ENCODE measurements at regions of chr12 and their contacts with region 1.

Region 1: GRCh38 chr12:123580772-123581171 is 3.6 kb upstream of the TMED2 start:
- DNase-seq: no peak
- H3K4me3 ChIP-seq: no peak overlapping the region
- H3K4me3 Mint-ChIP-seq: no peak overlapping the region
- H3K27ac Mint-ChIP-seq: no peak overlapping the region
- H3K4me1 ChIP-seq: peaks cover 20% of the 10 kb centered on the region
- H3K4me1 Mint-ChIP-seq: peaks cover 12% of the 10 kb centered on the region
- H3K27me3 ChIP-seq: no peaks in the 10 kb centered on the region
- H3K27me3 Mint-ChIP-seq: no peaks in the 10 kb centered on the region
- CTCF ChIP-seq: no peak

Region 2: DNA sequence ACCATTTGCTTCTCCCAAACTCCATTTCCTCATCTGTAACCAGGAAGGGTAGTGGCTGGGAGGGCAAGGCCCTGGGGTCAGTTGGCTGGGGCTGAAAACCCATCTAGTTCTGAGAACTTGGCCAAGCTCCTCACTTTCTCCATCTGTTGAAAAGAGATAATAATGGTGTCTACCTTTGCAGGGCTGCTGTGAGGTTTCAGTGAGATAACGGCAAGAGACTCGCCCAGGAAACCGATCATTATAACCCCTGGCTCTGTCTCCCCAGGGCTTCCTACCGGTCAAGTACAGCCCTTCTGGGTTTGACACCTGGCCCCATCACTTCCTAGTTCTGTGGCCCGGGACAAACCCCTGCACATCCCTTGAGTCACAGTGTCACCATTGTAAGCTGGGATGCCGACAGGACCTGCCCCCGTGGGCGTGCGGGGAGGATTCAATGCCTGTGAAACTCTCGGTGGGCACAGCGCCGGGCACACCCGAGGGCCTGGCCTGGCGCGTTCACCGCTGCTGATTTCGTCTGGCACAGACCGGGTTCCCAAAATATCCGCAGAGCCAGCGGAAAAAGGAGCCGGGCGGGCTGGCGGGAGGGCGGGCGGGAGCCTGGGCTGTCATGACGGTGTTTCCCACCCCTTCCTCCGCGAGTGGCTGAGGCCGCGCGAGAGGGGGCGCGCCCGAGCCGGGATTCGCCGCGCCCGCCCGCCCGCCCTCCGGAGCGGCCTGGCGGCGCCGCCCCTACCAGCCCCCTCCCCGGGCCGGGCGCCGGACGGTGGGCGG is 192.4 kb before region 1 on chr12:
- CTCF ChIA-PET with region 1: no interaction called
- POLR2A ChIA-PET with region 1: no interaction called
- intact Hi-C with region 1: loop called (anchors 5 kb)
- DNase-seq: peak; percentile 67 to 87
- H3K4me3 ChIP-seq: peak overlapping the region; percentile 88
- H3K4me3 Mint-ChIP-seq: peak overlapping the region; percentile 75
- H3K27ac Mint-ChIP-seq: peak overlapping the region; percentile 66
- H3K4me1 ChIP-seq: peaks cover 4% of the 10 kb centered on the region; the same call in 1 of the 2 replicates
- H3K4me1 Mint-ChIP-seq: peaks cover 21% of the 10 kb centered on the region
- H3K27me3 ChIP-seq: no peaks in the 10 kb centered on the region
- H3K27me3 Mint-ChIP-seq: no peaks in the 10 kb centered on the region
- CTCF ChIP-seq: peak in 1 of 2 experiments; percentile 5

Region 3: DNA sequence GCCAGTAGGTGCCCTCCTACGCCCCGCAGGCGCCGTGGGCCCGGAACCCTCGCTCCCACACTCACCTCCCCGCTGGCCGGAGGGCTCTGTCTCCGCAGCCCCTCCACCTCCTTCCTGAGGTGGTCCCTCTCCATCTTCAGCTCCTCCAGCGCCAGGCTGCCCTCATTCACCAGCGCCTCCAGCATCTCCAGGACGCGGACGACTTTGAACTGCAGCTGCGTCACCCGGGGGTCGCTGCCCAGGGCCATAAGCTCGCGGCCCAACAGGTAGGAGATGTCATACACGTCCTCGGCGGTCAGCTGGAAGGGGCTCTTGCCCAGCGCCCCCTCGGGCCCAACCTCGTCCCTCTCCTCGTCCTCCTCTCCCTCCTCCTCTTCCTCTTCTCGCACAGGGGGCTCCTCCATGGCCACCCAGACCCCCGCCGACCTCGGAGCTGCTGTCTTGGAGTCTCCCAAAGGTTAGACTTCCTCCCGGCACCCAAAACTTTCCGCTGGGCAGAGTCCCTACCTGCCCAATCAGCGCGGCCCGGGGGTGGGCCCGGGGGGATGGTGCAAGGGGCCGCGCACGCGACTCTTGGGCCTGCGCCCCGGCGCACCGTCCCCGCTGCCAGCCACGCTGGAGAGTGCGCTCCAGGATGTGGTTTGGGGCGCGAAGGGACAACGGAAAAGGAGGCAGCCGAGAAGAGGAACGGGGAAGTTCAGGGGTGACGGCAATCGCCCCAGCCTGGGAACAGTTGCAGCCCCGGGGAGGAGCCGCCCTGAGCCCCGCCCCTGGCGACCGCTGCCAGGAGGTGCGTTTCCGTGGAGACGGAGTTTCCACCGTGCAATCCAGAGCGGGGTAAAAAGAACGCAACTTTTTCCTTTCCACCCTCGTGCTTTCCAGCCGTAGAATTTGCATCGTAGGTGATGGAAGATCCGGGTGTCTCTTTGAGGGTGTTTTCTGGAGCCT is 144.5 kb before region 1 on chr12 and contains the start of gene RILPL2:
- CTCF ChIA-PET with region 1: no interaction called
- POLR2A ChIA-PET with region 1: interaction called, 3 read pairs
- intact Hi-C with region 1: loop called (anchors 5 kb)
- DNase-seq: peak; percentile 78 to 86
- H3K4me3 ChIP-seq: peak within 1 kb of the TSS; percentile 86
- H3K4me3 Mint-ChIP-seq: peak within 1 kb of the TSS; percentile 92
- H3K27ac Mint-ChIP-seq: peak within 1 kb of the TSS; percentile 89
- H3K4me1 ChIP-seq: no peaks in the 10 kb centered on the region
- H3K4me1 Mint-ChIP-seq: no peaks in the 10 kb centered on the region
- H3K27me3 ChIP-seq: no peaks in the 10 kb centered on the region
- H3K27me3 Mint-ChIP-seq: no peaks in the 10 kb centered on the region
- CTCF ChIP-seq: peak in 1 of 2 experiments; percentile 16
- total RNA-seq, gene RILPL2: 3.1 and 3.2 TPM in 2 replicates

Region 4: DNA sequence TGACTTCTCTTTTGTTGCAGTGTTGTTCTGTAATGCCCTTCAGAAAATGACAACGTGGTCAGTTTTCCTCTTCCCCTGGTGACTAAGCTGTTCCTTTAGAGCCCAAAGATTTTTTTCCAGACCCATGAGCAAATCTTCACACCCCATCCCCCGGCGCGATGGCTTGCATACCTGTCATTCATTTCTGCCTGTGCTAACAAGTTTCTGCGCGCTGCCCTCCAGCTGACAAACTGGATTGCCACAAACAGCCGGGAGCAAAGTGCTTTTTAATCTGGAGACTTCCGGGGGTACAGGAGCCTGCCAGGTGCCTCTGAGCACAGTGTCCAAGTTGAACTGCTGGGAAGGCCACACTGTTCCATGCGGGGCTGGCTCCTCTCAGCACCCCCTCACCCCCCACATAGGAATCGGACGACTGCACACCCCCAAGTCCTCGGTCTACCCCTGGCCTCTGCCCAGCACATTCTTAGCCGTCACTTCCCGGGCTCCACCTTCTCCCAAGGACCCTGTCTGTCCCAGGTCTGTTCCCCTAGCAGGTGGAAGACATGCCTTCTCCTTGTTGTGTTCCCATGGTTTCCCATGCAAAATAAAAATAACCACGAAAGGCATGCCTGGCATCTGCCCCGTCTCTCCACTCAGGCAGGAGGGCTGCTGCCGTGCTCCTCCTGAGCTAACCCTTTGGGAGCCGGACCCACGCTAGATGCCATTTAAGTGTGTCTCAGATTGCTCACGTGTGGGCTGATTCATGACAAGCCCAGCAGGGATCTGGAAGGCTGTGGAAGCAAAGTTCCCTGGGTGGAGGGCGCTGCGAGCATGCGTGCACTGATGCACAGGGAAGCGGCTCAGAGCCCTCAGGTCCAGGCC is 61.4 kb before region 1 on chr12:
- CTCF ChIA-PET with region 1: no interaction called
- POLR2A ChIA-PET with region 1: no interaction called
- intact Hi-C with region 1: loop called (anchors 1 kb)
- DNase-seq: peak; percentile 90 to 91
- H3K4me3 ChIP-seq: no peak overlapping the region
- H3K4me3 Mint-ChIP-seq: peak overlapping the region; percentile 64
- H3K27ac Mint-ChIP-seq: peak overlapping the region; percentile 98
- H3K4me1 ChIP-seq: peaks cover 35% of the 10 kb centered on the region
- H3K4me1 Mint-ChIP-seq: peaks cover 32% of the 10 kb centered on the region
- H3K27me3 ChIP-seq: no peaks in the 10 kb centered on the region
- H3K27me3 Mint-ChIP-seq: no peaks in the 10 kb centered on the region
- CTCF ChIP-seq: no peak

Region 5: GRCh38 chr12:123533672-123534643 is 46.8 kb before region 1 on chr12 and contains the start of gene RILPL1:
- CTCF ChIA-PET with region 1: interaction called, 3 read pairs
- POLR2A ChIA-PET with region 1: no interaction called
- intact Hi-C with region 1: loop called (anchors 5 kb)
- DNase-seq: peak; percentile 83 to 84
- H3K4me3 ChIP-seq: peak within 1 kb of the TSS; percentile 99
- H3K4me3 Mint-ChIP-seq: peak within 1 kb of the TSS; percentile 86
- H3K27ac Mint-ChIP-seq: peak within 1 kb of the TSS; percentile 84
- H3K4me1 ChIP-seq: peaks cover 12% of the 10 kb centered on the region
- H3K4me1 Mint-ChIP-seq: peaks cover 2% of the 10 kb centered on the region
- H3K27me3 ChIP-seq: no peaks in the 10 kb centered on the region
- H3K27me3 Mint-ChIP-seq: no peaks in the 10 kb centered on the region
- CTCF ChIP-seq: peak; percentile 11 to 18
- total RNA-seq, gene RILPL1: 16.2 and 17.0 TPM in 2 replicates

Region 6: DNA sequence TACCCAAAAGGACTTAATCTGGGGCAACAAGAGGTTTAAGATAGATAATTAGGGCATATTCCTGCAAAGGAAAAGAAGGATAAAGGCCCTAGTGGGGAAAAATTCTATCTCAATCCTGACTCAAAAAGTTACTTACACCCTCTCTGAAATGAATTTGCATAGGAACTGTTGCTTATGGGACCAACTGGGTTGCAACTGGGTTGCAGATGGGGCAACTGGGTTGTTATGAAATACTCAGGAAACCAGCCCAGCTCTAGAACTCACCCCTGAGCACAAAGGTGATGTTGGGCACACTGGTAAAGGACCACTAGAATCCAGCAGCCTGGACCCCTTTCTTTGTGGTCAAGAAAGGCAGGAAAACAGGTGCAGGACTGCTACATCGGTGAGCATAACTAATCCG is 30.1 kb before region 1 on chr12:
- CTCF ChIA-PET with region 1: no interaction called
- POLR2A ChIA-PET with region 1: no interaction called
- intact Hi-C with region 1: no loop called
- DNase-seq: no peak
- H3K4me3 ChIP-seq: no peak overlapping the region
- H3K4me3 Mint-ChIP-seq: no peak overlapping the region
- H3K27ac Mint-ChIP-seq: no peak overlapping the region
- H3K4me1 ChIP-seq: no peaks in the 10 kb centered on the region
- H3K4me1 Mint-ChIP-seq: no peaks in the 10 kb centered on the region
- H3K27me3 ChIP-seq: no peaks in the 10 kb centered on the region
- H3K27me3 Mint-ChIP-seq: no peaks in the 10 kb centered on the region
- CTCF ChIP-seq: no peak

Region 7: GRCh38 chr12:124006085-124006845 is 425.5 kb after region 1 on chr12:
- CTCF ChIA-PET with region 1: no interaction called
- POLR2A ChIA-PET with region 1: no interaction called
- intact Hi-C with region 1: no loop called
- DNase-seq: no peak
- H3K4me3 ChIP-seq: no peak overlapping the region
- H3K4me3 Mint-ChIP-seq: no peak overlapping the region
- H3K27ac Mint-ChIP-seq: no peak overlapping the region
- H3K4me1 ChIP-seq: no peaks in the 10 kb centered on the region
- H3K4me1 Mint-ChIP-seq: no peaks in the 10 kb centered on the region
- H3K27me3 ChIP-seq: no peaks in the 10 kb centered on the region
- H3K27me3 Mint-ChIP-seq: no peaks in the 10 kb centered on the region
- CTCF ChIP-seq: no peak

Region 8: DNA sequence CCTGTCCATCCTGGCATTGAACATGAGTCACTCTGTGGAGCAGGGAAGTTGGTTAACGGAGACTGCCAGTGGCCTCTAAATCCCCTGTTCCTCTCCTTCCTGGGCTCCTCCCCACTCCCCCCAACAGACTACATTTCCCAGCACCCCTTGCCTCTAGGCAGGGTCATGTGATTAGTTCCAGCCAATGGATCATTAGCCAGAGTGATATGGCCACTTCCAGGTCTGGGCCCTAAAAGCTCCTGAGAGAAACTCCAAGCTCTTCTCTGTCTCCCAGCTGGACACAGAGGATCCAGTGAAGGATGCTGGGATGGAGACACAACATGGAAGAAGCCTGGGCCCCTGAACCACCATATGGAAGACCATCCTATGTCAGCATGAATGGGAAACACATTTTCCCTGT is 659.7 kb after region 1 on chr12:
- CTCF ChIA-PET with region 1: no interaction called
- POLR2A ChIA-PET with region 1: no interaction called
- intact Hi-C with region 1: no loop called
- DNase-seq: peak; percentile 69 to 79
- H3K4me3 ChIP-seq: no peak overlapping the region
- H3K4me3 Mint-ChIP-seq: no peak overlapping the region
- H3K27ac Mint-ChIP-seq: peak overlapping the region; percentile 79
- H3K4me1 ChIP-seq: peaks cover 51% of the 10 kb centered on the region
- H3K4me1 Mint-ChIP-seq: peaks cover 33% of the 10 kb centered on the region
- H3K27me3 ChIP-seq: no peaks in the 10 kb centered on the region
- H3K27me3 Mint-ChIP-seq: no peaks in the 10 kb centered on the region
- CTCF ChIP-seq: no peak